CD4-positive, alpha-beta T cell (primary cell): ENCODE measurements at regions of chr2 and their contacts with region 1.

Region 1: DNA sequence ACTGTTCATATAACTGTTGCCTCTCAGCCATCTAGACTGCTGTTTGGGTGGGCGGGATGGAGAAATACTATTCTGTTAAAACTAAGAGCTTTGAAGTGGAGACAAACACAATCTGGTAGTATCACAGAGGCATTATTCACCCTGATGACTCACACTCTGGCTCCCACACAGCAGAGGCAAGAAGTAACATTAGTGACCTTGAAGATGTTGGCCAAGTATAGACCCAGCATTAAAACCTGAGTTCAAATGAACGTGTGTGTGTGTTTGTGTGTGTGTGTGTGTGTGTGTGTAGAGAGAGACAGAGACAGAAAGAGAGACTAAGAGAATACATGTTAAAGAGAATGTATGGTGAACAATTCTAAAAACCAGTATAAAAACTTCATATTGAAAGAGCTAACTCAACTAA is 22.5 kb upstream of the ACVR1 start:
- DNase-seq: peak in 13 of 14 experiments; percentile 33 to 73 (median 47)
- ATAC-seq: peak; percentile 62
- H3K4me3 ChIP-seq: peak overlapping the region; percentile 24
- H3K4me3 Mint-ChIP-seq: peak overlapping the region; percentile 55
- H3K27ac ChIP-seq: peak overlapping the region; percentile 49 to 76
- H3K27ac Mint-ChIP-seq: peak overlapping the region; percentile 85
- H3K4me1 ChIP-seq: peaks cover 63% of the 10 kb centered on the region
- H3K4me1 Mint-ChIP-seq: peaks cover 74% of the 10 kb centered on the region
- H3K27me3 ChIP-seq: no peaks in the 10 kb centered on the region
- H3K27me3 Mint-ChIP-seq: no peaks in the 10 kb centered on the region
- CTCF ChIP-seq: no peak

Region 2: GRCh38 chr2:157628477-157629415 is 269.8 kb before region 1 on chr2 and contains the start of gene ACVR1C:
- CTCF ChIA-PET with region 1: no interaction called
- POLR2A ChIA-PET with region 1: interaction called, 3 read pairs
- intact Hi-C with region 1: loop called in 1 of 2 experiments (anchors 5 kb)
- DNase-seq: peak; percentile 42 to 92 (median 61)
- ATAC-seq: peak; percentile 77
- H3K4me3 ChIP-seq: peak within 1 kb of the TSS; percentile 81
- H3K4me3 Mint-ChIP-seq: peak within 1 kb of the TSS; percentile 97
- H3K27ac ChIP-seq: peak within 1 kb of the TSS in 1 of 2 donors; percentile 74
- H3K27ac Mint-ChIP-seq: peak within 1 kb of the TSS; percentile 86
- H3K4me1 ChIP-seq: peaks cover 22% of the 10 kb centered on the region
- H3K4me1 Mint-ChIP-seq: peaks cover 40% of the 10 kb centered on the region
- H3K27me3 ChIP-seq: no peaks in the 10 kb centered on the region
- H3K27me3 Mint-ChIP-seq: no peaks in the 10 kb centered on the region
- CTCF ChIP-seq: peak; percentile 43
- total RNA-seq, gene ACVR1C: 5.2 to 6.2 TPM

Region 3: GRCh38 chr2:157866202-157866601 is 32.4 kb before region 1 on chr2:
- CTCF ChIA-PET with region 1: interaction called, 4 read pairs
- POLR2A ChIA-PET with region 1: no interaction called
- intact Hi-C with region 1: loop called in 1 of 2 experiments (anchors 5 kb)
- DNase-seq: no peak
- ATAC-seq: no peak
- H3K4me3 ChIP-seq: no peak overlapping the region
- H3K4me3 Mint-ChIP-seq: no peak overlapping the region
- H3K27ac ChIP-seq: no peak overlapping the region
- H3K27ac Mint-ChIP-seq: no peak overlapping the region
- H3K4me1 ChIP-seq: peaks cover 12% of the 10 kb centered on the region
- H3K4me1 Mint-ChIP-seq: peaks cover 60% of the 10 kb centered on the region
- H3K27me3 ChIP-seq: no peaks in the 10 kb centered on the region
- H3K27me3 Mint-ChIP-seq: no peaks in the 10 kb centered on the region
- CTCF ChIP-seq: no peak

Region 4: GRCh38 chr2:158006961-158007719 is 108.5 kb after region 1 on chr2:
- CTCF ChIA-PET with region 1: no interaction called
- POLR2A ChIA-PET with region 1: interaction called, 3 read pairs
- intact Hi-C with region 1: loop called (anchors 2 to 5 kb)
- DNase-seq: peak in 2 of 14 experiments; percentile 16 to 20
- ATAC-seq: no peak
- H3K4me3 ChIP-seq: no peak overlapping the region
- H3K4me3 Mint-ChIP-seq: no peak overlapping the region
- H3K27ac ChIP-seq: no peak overlapping the region
- H3K27ac Mint-ChIP-seq: no peak overlapping the region
- H3K4me1 ChIP-seq: no peaks in the 10 kb centered on the region
- H3K4me1 Mint-ChIP-seq: peaks cover 9% of the 10 kb centered on the region
- H3K27me3 ChIP-seq: no peaks in the 10 kb centered on the region
- H3K27me3 Mint-ChIP-seq: no peaks in the 10 kb centered on the region
- CTCF ChIP-seq: no peak